ENCODE measurements at regions of chr11 and their contacts with region 1.

Region 1: GRCh38 chr11:72328366-72329224 is 84.6 kb upstream of the PHOX2A start:
- DNase-seq: no peak
- H3K4me3 Mint-ChIP-seq: no peak overlapping the region
- H3K27ac Mint-ChIP-seq: no peak overlapping the region
- H3K4me1 Mint-ChIP-seq: peaks cover 19% of the 10 kb centered on the region
- H3K27me3 Mint-ChIP-seq: no peaks in the 10 kb centered on the region

Region 2: DNA sequence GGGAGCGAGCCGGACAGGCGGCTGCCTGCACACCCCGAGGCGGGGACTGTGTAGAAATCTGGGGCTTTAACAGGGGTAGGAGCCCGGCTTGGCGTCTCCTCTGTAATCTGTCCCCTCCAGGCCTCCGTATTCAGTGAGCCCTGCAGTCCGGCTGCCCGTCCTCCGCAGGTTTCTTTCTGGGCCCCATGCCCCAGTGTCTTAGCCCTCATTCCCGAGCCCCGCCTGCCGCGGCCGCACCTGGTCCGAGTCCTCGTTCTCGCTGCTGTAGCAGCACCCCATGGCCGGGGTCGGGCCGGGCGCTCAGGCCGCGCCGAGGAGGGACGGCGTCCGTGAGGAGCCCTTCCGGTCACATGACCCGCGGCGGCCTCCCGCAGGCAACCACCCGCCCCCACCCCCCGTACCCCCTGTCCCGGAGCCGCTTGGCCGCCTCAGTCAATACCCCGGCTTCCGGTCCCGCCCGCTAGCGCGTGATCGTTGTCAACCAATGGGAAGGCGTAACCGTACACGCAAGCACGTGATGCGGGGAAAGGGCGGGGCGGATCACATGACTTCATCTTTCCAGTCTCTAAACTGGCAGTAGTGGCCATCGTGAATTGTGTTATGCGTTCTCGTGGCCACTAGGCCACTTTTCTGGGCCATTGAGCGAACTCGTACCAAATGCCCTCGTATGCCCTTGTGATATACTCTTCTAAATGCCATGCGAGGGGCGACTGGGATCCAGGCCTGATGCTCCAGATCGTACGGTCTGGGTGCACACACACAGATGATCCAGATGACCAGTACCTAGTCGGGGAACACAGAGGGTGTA is 225.4 kb before region 1 on chr11 and contains the start of gene LAMTOR1:
- CTCF ChIA-PET with region 1: no interaction called
- POLR2A ChIA-PET with region 1: no interaction called
- intact Hi-C with region 1: no loop called
- DNase-seq: peak; percentile 99
- H3K4me3 Mint-ChIP-seq: peak within 1 kb of the TSS; percentile 80
- H3K27ac Mint-ChIP-seq: peak within 1 kb of the TSS; percentile 83
- H3K4me1 Mint-ChIP-seq: peaks cover 37% of the 10 kb centered on the region
- H3K27me3 Mint-ChIP-seq: no peaks in the 10 kb centered on the region
- total RNA-seq, gene LAMTOR1: 54.3 to 56.2 TPM

Region 3: DNA sequence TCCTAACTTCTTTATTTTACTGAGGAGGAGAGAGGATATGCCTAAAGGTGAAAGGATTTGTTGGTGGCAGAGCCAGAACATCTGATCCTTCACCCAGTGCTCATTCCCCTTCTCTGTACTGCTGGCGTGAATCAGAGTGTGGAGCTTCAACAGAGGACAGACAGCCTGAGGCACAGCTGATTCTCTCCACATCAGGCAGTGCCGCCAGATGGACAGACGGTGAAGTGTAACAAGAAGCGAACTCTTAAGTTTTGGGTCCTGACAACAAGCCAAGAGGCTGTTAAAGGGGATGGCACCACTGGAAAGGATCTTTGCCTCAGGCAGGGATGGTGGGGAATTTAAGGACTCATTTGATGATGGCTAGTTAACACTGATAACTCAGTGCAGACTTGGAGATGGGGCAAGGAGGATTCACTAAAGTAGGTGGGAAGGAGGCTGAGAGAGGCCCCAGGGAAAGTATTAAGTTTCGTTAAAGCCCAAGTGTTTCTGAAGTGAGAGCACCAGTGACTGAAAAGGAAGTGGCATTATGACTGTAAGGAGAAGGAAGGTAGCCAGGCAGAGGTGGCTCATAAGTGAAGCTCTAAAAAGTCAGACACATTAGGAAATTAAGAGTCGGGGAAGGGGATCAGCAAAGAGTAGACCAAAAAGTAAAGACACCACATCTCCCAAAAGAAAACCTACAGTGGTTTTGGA is 24.4 kb after region 1 on chr11:
- CTCF ChIA-PET with region 1: interaction called, 3 read pairs
- POLR2A ChIA-PET with region 1: interaction called, 9 read pairs
- intact Hi-C with region 1: loop called (anchors 1 kb)
- DNase-seq: peak; percentile 47
- H3K4me3 Mint-ChIP-seq: no peak overlapping the region
- H3K27ac Mint-ChIP-seq: no peak overlapping the region
- H3K4me1 Mint-ChIP-seq: no peaks in the 10 kb centered on the region
- H3K27me3 Mint-ChIP-seq: no peaks in the 10 kb centered on the region

Region 4: DNA sequence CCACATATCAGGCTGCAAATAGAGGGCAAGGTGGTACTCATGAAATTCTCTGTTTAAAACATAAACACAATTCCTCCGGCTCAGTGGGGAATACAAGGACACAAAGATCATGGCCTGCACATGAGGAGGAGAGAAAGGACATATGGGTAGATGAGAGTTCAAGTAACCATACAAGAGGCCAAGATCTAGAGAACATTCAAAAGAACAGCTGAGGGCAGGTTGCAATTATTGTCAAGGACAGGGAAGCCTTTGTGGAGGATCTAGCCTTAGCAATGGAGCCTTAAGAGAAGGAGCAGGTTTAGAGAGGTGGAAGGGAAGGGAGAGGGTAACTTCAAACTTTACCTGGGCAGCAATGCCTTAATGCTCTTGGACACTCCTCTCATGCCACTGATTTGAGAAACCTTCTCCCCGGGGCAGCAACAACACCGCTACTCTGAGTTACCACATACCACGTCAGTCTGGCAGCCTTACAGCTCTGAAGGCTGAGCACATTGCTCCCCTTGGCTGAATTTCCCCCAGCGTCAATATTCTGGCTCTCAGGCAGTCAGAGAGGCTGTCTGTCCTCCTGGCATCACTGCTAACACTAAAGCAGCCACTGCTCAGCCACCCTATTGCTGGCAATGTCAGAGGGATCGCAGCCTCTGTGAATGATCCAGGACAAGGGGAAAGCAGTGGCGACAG is 50.2 kb after region 1 on chr11:
- CTCF ChIA-PET with region 1: no interaction called
- POLR2A ChIA-PET with region 1: no interaction called
- intact Hi-C with region 1: no loop called
- DNase-seq: no peak
- H3K4me3 Mint-ChIP-seq: no peak overlapping the region
- H3K27ac Mint-ChIP-seq: no peak overlapping the region
- H3K4me1 Mint-ChIP-seq: no peaks in the 10 kb centered on the region
- H3K27me3 Mint-ChIP-seq: no peaks in the 10 kb centered on the region

Region 5: GRCh38 chr11:72413914-72414628 is 85.5 kb after region 1 on chr11:
- CTCF ChIA-PET with region 1: interaction called, 23 read pairs
- POLR2A ChIA-PET with region 1: no interaction called
- intact Hi-C with region 1: no loop called
- DNase-seq: peak; percentile 89
- H3K4me3 Mint-ChIP-seq: no peak overlapping the region
- H3K27ac Mint-ChIP-seq: no peak overlapping the region
- H3K4me1 Mint-ChIP-seq: peaks cover 18% of the 10 kb centered on the region
- H3K27me3 Mint-ChIP-seq: no peaks in the 10 kb centered on the region

Measured in activated CD4-positive, alpha-beta memory T cell treated with anti-CD3 and anti-CD28 coated beads for 36 hours (primary cell).